Mammary epithelial cell (primary cell): ENCODE measurements at regions of chr1 and their contacts with region 1.

Region 1: DNA sequence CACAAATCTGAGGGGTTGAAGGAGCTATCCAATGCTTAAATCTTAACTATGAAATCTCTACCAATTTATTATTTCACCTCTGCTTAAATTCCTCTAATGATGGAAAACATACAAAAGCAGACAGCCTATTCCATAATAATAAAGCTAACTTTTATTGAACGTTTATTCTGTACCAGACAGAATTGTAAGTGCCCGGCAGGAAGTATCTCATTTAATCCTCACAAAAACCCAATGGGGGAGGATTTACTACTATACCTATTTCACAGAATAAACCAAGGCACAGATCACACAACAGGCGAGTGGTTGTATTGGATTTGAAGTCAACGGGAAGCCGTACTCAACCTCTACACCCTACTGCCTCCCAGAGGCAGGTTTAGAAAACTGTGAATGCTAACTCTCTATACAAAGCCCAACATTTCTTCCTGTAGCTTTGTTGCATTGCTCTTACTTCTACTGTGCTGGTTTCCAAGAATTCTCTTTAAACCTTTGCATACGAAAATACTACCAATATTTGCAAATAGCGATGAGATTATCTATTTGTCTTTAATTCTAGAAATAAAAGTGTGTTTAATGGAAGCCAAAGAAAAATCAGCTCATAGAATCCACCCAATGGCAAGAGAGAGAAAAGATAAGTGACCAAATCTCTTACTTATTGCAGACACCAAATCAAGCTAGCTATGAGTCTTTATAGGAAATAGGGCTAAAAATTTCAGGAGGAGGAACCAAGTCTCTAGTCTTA is 33.5 kb upstream of the C1orf53 start:
- DNase-seq: peak; percentile 58
- H3K4me3 ChIP-seq: no peak overlapping the region
- H3K27ac ChIP-seq: no peak overlapping the region
- H3K4me1 ChIP-seq: no peaks in the 10 kb centered on the region
- H3K27me3 ChIP-seq: no peaks in the 10 kb centered on the region
- CTCF ChIP-seq: peak; percentile 66 to 85

Region 2: DNA sequence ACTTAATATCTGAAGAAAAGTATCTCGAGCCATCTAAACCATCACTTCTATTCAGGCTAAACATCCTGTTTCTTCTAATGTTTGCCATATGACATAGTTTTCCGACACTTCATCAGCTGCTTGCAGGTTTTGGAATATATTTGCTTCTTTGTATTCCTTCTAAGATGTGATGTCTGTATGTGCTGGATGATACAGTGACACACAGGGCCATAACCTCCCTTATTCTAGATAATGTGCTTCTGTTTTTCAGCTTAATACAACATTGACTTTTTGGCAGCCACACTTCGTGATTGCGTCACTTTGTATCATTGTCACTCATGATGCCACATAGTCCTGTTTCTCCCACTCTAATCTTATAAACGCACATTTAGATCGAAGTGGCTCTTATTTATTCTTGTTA is 444.5 kb before region 1 on chr1:
- CTCF ChIA-PET with region 1: no interaction called
- dilution Hi-C with region 1: no loop called
- in situ Hi-C with region 1: no loop called
- intact Hi-C with region 1: no loop called
- DNase-seq: no peak
- H3K4me3 ChIP-seq: no peak overlapping the region
- H3K27ac ChIP-seq: no peak overlapping the region
- H3K4me1 ChIP-seq: no peaks in the 10 kb centered on the region
- H3K27me3 ChIP-seq: no peaks in the 10 kb centered on the region
- CTCF ChIP-seq: no peak

Region 3: DNA sequence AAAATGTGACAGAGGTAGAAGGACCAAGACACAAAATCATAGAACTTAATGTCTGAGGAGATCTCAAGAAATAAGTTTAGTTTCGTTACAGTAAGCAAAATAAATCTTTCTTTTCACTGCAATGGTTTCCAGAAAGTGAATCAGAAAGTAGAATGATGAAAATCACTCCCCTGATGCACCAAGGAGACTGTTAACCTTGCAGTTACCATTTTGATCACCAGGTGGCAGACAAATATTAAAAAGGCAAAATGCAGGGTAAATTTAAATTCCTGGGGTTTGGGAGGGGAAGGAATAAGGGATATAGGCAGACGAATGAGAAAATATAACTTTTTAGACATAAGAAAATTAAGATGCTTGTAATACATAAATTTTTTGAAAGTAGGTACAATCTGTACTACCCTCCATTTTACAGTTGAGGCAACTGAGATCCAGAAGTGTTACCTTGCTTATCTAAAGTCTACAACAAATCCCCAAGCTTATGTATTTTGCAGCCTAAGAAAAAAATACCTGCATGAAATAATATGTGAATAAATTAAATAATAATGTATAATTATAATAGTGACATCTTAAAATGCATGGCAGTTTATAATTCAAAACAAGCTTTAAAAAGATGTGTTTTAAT is 347.7 kb before region 1 on chr1:
- CTCF ChIA-PET with region 1: no interaction called
- dilution Hi-C with region 1: no loop called
- in situ Hi-C with region 1: loop called in 1 of 2 experiments (anchors 10 kb)
- intact Hi-C with region 1: loop called (anchors 1 kb)
- DNase-seq: peak; percentile 17
- H3K4me3 ChIP-seq: no peak overlapping the region
- H3K27ac ChIP-seq: no peak overlapping the region
- H3K4me1 ChIP-seq: no peaks in the 10 kb centered on the region
- H3K27me3 ChIP-seq: no peaks in the 10 kb centered on the region
- CTCF ChIP-seq: peak; percentile 67 to 69

Region 4: DNA sequence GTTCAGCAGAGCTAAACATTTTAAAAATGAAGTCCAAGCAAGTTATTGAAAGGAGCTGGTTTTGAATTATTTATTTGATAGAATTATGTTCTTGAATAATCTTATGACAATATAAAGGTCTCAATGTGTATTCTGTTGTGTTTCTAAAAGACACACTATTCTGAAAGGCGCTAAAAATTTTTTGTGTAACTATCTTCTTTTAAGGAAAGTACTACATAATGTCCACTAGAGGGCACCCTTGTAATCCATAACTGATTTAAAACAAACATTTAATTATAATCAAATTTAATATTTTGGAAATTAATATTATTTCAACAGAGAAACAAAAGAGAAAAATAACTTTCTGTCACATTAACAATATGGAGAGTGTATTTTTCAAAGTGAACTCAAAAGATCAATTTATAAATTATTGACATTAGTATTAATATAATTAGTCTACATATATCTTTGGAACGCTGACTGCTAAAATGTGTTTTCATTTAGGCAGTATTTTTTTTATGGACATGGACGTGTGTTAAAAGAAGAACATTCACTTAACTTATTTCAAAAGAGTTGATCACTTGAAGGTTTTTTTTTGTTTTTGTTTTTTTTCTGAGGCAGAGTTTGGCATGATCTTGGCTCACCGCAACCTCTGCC is 342.1 kb before region 1 on chr1:
- CTCF ChIA-PET with region 1: no interaction called
- dilution Hi-C with region 1: no loop called
- in situ Hi-C with region 1: loop called in 1 of 2 experiments (anchors 10 kb)
- intact Hi-C with region 1: loop called (anchors 1 kb)
- DNase-seq: peak; percentile 2
- H3K4me3 ChIP-seq: no peak overlapping the region
- H3K27ac ChIP-seq: no peak overlapping the region
- H3K4me1 ChIP-seq: no peaks in the 10 kb centered on the region
- H3K27me3 ChIP-seq: no peaks in the 10 kb centered on the region
- CTCF ChIP-seq: peak; percentile 44 to 54

Region 5: DNA sequence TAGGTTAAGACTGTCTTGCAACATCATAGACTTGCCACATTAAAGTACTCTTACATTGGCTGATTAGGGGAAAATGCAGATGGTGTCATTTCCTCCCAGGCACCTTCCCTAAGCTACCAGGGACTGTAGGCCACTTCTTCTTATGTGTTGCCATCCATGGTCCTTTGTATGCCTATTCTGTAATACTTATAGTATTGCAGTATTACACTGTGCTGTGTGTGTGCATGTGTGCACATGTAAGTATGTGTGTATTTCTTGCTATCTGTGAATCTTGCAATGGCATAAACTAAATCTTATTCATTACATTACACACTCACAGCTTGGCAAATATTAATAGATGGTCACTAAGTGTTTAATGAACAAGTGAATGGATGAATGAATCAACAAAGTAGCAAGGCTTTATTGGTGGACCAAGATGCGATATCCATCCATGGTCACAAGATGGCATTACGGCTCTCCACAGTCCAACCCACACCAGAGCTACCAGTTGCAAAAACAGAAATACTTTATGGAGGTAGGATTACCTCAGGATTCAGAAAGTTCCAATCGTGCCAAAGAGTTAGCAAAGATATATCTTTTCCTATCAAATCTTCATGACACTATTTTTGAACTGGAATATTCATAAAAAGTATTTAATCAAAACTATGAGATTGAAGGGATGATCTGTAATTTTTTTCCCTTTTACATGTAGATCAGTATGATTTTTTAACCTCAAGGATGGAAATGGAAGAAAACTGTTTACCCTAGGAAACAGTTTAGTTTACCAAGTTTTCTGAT is 253.8 kb before region 1 on chr1:
- CTCF ChIA-PET with region 1: interaction called, 6 read pairs
- dilution Hi-C with region 1: no loop called
- in situ Hi-C with region 1: loop called in 1 of 2 experiments (anchors 10 kb)
- intact Hi-C with region 1: loop called (anchors 1 kb)
- DNase-seq: peak; percentile 19
- H3K4me3 ChIP-seq: no peak overlapping the region
- H3K27ac ChIP-seq: no peak overlapping the region
- H3K4me1 ChIP-seq: no peaks in the 10 kb centered on the region
- H3K27me3 ChIP-seq: no peaks in the 10 kb centered on the region
- CTCF ChIP-seq: peak; percentile 50 to 70

Region 6: DNA sequence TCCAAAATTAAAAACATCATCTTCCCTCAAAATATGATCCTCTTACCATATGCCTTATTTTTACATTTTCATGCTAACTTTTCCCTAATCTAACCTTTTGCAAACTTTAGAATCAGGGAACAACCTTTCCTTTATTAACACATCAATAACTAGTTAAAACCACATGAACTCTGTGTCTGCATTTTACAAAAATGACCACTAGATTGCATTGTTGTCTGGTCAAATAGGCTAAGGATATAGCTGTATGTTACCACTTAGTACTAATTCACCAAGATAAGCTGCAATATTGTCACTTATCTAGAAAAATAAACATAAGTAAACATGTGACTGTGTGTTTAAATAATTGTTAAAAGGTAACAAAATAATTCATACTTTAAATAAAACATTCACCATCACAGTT is 176.0 kb before region 1 on chr1:
- CTCF ChIA-PET with region 1: interaction called, 4 read pairs
- dilution Hi-C with region 1: no loop called
- in situ Hi-C with region 1: loop called (anchors 10 to 25 kb)
- intact Hi-C with region 1: loop called (anchors 1 kb)
- DNase-seq: peak; percentile 11
- H3K4me3 ChIP-seq: no peak overlapping the region
- H3K27ac ChIP-seq: no peak overlapping the region
- H3K4me1 ChIP-seq: peaks cover 5% of the 10 kb centered on the region
- H3K27me3 ChIP-seq: no peaks in the 10 kb centered on the region
- CTCF ChIP-seq: peak; percentile 29 to 55

Region 7: GRCh38 chr1:197775282-197776262 is 93.3 kb before region 1 on chr1 and contains the start of gene DENND1B:
- CTCF ChIA-PET with region 1: interaction called, 4 read pairs
- dilution Hi-C with region 1: no loop called
- in situ Hi-C with region 1: no loop called
- intact Hi-C with region 1: loop called (anchors 1 kb)
- DNase-seq: peak; percentile 69
- H3K4me3 ChIP-seq: peak within 1 kb of the TSS; percentile 76 to 78 (median 77)
- H3K27ac ChIP-seq: peak within 1 kb of the TSS; percentile 83
- H3K4me1 ChIP-seq: peaks cover 23% of the 10 kb centered on the region
- H3K27me3 ChIP-seq: no peaks in the 10 kb centered on the region
- CTCF ChIP-seq: peak in 1 of 2 donors; percentile 22
- total RNA-seq, gene DENND1B: 12.5 to 31.7 TPM